Calu3 (cell line): ENCODE measurements at regions of chr5 and their contacts with region 1.

Region 1: GRCh38 chr5:65925601-65926275 is 637 bp upstream of the ERBIN start:
- DNase-seq: peak; percentile 88
- H3K4me3 Mint-ChIP-seq: peak overlapping the region; percentile 94
- H3K27ac Mint-ChIP-seq: peak overlapping the region; percentile 93
- H3K4me1 Mint-ChIP-seq: peaks cover 51% of the 10 kb centered on the region
- H3K27me3 Mint-ChIP-seq: no peaks in the 10 kb centered on the region
- CTCF ChIP-seq: no peak

Region 2: DNA sequence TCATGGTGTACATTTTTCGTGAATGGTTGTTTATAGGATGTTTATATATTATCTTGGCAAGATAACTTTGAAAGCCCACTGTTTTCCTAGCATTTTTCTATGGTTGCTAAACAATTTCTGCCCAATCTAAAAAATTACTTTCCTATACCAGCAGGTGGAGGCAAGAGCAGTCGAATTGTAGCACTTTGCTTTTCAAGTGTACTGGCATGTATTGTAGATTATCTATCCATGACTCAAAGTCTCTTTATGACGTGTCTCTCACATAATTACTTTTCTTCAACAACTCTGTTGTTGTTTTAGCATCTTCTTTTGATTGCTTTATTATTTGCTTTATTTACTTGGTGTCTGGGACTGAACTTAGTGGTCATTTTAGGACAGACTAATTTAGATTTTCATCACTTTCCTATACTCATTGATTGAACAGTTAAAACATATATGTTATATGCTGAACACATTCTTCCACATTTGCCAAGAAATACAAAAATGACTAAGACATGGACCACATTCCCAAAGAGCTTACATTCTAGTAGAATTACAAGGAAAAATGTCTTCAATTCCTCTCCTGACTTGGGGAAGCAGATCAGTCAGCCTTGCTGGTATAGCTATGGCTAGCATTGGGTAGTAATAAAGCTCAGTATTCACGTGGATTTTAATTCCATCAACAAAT is 183.0 kb before region 1 on chr5:
- CTCF ChIA-PET with region 1: no interaction called
- intact Hi-C with region 1: loop called (anchors 5 kb)
- DNase-seq: peak; percentile 22
- H3K4me3 Mint-ChIP-seq: no peak overlapping the region
- H3K27ac Mint-ChIP-seq: peak overlapping the region; percentile 7
- H3K4me1 Mint-ChIP-seq: peaks cover 26% of the 10 kb centered on the region
- H3K27me3 Mint-ChIP-seq: no peaks in the 10 kb centered on the region
- CTCF ChIP-seq: peak; percentile 69

Region 3: GRCh38 chr5:65760504-65761275 is 165.0 kb before region 1 on chr5:
- CTCF ChIA-PET with region 1: no interaction called
- intact Hi-C with region 1: loop called (anchors 2 kb)
- DNase-seq: peak; percentile 30
- H3K4me3 Mint-ChIP-seq: no peak overlapping the region
- H3K27ac Mint-ChIP-seq: peak overlapping the region; percentile 46
- H3K4me1 Mint-ChIP-seq: no peaks in the 10 kb centered on the region
- H3K27me3 Mint-ChIP-seq: no peaks in the 10 kb centered on the region
- CTCF ChIP-seq: no peak

Region 4: DNA sequence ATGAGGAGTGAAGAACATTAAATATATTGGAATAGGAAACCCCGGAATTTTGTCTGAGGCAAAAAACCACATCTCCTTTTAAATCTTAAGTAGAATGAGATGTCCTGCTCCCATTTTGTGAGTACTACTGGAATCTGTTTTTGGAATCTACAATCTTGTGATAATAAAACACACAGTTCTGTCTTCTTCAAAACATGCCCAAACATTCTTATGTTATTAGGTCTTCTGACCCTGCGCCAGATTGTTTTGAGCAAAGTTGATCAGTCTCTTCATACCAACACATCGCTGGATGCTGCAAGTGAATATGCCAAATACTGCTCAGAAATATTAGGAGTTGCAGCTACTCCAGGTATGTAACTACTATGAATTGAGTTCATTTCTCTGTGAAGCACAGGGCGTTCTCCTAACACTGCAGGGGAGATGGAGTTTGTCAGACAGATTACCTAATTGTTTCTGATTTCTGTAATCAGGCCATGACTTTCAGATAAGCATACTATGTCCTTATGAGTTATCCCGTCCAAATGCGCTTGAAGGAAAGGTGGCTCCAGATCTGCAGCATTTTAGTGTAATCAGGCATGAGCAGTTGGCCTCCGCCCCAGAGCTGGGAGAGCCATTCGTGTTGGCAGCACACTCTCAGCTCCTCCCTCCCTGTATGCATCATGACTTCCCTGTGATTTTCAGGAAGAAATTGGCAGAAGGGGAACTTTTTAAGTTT is 115.8 kb before region 1 on chr5:
- CTCF ChIA-PET with region 1: interaction called, 4 read pairs
- intact Hi-C with region 1: loop called (anchors 2 kb)
- DNase-seq: peak; percentile 64
- H3K4me3 Mint-ChIP-seq: no peak overlapping the region
- H3K27ac Mint-ChIP-seq: peak overlapping the region; percentile 85
- H3K4me1 Mint-ChIP-seq: peaks cover 64% of the 10 kb centered on the region
- H3K27me3 Mint-ChIP-seq: no peaks in the 10 kb centered on the region
- CTCF ChIP-seq: no peak

Region 5: DNA sequence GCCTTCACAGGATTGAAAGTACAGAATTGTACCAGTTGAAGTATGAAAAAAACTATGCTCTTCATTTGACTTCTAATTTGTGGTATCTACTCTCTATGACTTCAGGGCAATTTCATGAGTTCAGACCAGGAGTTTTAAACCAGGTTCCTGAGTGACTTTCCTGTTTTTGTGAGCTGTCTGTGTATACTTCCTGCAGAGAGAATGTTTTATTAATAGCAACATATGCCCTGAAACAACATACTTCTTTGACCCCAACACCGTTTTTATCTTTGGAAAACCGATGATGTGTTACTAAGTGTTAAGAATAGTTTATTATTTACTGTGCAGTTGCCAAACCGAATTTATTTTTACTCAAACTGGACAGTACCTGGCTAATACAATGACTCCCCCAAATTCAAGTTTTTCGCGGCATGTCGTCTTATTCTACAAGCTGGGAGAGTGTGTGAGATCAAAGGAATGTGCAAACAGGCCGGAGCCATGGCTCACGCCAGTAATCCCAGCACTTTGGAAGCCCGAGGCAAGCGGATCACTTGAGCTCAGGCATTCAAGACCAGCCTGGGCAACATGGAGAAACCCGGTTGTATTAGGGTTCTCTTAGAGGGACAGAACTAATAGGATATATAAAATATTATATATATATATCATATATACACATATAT is 58.1 kb before region 1 on chr5:
- CTCF ChIA-PET with region 1: no interaction called
- intact Hi-C with region 1: loop called (anchors 2 kb)
- DNase-seq: no peak
- H3K4me3 Mint-ChIP-seq: no peak overlapping the region
- H3K27ac Mint-ChIP-seq: peak overlapping the region; percentile 1
- H3K4me1 Mint-ChIP-seq: peaks cover 48% of the 10 kb centered on the region
- H3K27me3 Mint-ChIP-seq: no peaks in the 10 kb centered on the region
- CTCF ChIP-seq: no peak

Region 6: DNA sequence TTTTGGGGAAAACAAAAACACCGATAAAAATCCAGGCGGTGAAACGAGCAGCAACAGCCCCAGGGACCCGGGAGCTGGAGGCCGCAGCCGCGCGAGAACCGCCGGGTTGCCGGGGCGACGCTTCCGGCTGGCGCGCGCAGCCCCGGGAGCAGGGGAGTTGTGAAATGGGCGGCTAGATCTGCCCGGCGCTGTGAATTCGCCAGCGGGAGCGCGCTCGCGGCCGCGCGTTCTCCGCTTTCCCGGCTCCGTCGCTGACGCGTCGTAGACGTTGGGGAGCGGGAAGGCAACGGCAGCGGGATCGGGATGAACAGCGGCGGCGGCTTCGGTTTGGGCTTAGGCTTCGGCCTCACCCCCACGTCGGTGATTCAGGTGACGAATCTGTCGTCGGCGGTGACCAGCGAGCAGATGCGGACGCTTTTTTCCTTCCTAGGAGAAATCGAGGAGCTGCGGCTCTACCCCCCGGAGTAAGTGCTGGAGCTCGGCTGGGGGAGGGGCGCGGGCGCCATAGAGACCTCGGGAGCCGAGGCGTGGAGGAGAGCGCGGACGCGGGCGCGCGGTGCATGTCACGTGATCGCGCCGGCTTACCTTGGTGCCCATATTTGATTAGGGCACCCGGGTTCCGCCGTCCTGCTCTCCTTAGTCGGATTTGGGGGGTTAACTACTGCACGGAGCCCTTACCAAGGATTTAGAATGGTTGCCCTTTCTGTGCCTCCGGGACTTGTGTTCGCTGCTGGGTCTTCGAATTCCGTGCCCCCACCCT is 218.5 kb after region 1 on chr5 and contains the start of gene SREK1:
- CTCF ChIA-PET with region 1: no interaction called
- intact Hi-C with region 1: loop called (anchors 10 kb)
- DNase-seq: peak; percentile 94
- H3K4me3 Mint-ChIP-seq: peak within 1 kb of the TSS; percentile 84
- H3K27ac Mint-ChIP-seq: peak within 1 kb of the TSS; percentile 88
- H3K4me1 Mint-ChIP-seq: no peaks in the 10 kb centered on the region
- H3K27me3 Mint-ChIP-seq: no peaks in the 10 kb centered on the region
- CTCF ChIP-seq: no peak
- total RNA-seq, gene SREK1: 99.6 and 102 TPM in 2 replicates